ENCODE measurements at regions of chr19 and their contacts with region 1.

Region 1: DNA sequence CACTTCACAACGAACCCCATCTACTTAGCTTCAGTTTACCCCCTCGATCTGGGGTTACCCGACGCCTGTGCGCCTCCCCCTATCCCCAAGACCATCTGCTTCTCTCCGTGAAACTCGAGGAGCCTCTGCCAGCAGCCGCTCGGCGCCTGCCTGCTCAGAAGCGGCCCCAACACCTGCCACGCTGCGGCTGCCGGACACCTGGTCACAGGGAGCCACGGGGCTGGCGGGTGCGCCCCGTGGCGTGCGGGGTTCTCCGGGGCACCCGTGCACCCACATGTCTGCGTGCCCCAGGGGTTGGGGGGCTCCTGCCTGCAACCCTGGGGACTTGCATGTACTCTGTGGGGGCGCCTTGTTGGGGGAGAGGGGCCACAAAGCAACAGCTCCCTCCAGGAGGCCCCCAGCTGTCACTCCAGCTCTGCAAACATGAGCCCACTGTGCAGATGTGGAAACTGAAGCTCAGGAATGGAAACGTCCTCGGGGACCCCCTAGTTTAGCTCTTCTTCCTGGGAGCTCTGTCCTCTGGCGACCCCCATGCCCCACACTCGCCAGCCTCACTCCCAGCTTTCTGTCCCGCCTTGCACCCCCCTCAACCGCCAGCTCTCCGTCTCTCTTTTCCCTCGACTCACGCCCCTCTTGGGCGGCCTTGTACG is 7.0 kb upstream of the SEMA6B start:
- DNase-seq: no peak
- H3K4me3 ChIP-seq: no peak overlapping the region
- H3K27ac ChIP-seq: peak overlapping the region in 1 of 2 donors; percentile 52
- H3K4me1 ChIP-seq: no peaks in the 10 kb centered on the region
- H3K27me3 ChIP-seq: peaks cover 0 to 6% of the 10 kb centered on the region in 2 donors
- CTCF ChIP-seq: no peak
- POLR2A ChIP-seq: no peak

Region 2: DNA sequence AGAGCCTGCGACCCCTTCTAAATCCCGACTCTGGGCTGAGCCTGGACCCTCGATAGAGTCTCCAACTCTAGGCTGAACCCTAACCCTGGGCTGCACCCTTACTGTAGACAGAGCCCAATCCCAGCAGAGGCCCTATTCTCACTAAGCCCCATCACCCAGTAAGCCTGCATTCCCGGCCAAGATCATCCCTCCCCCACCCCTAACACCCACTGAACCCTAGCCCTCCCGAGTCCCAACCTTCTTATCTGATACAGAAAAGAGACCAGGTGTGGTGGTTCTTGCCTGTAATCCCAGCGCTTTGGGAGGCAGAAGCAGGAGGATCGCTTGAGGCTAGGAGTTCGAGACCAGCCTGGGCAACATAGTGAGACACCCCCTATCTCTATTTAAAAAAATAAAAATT is 70.2 kb after region 1 on chr19:
- intact Hi-C with region 1: loop called (anchors 1 kb)
- DNase-seq: no peak
- H3K4me3 ChIP-seq: peak overlapping the region in 2 of 3 donors; percentile 57 to 72
- H3K27ac ChIP-seq: no peak overlapping the region
- H3K4me1 ChIP-seq: no peaks in the 10 kb centered on the region
- H3K27me3 ChIP-seq: no peaks in the 10 kb centered on the region
- CTCF ChIP-seq: no peak
- POLR2A ChIP-seq: no peak